Lower leg skin (tissue), 4 donors: ENCODE measurements at regions of chr17 and their contacts with region 1.

Region 1: GRCh38 chr17:59062509-59062908 is 44.2 kb downstream of the TRIM37 start:
- DNase-seq: no peak
- H3K4me3 ChIP-seq: no peak overlapping the region
- CTCF ChIP-seq: no peak
- POLR2A ChIP-seq: no peak

Region 2: DNA sequence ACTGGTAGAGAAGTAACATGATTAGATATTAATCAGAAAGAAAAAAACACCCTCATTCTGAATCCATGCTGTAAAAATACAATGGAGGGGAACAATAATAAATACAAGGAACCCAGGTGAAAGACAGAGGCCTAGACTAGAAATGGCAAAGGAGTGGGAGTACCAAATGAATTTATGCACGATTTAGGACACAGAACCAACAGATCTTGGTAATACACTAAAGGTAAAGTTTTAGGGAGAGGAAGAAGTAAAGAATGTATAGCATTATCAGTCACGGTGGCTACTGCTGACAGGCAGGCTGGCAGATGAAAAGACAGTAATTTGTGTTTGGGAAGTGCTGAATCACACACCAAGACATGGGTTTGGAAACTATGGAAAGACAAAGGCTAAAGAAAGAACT is 22.3 kb before region 1 on chr17:
- intact Hi-C with region 1: loop called (anchors 1 kb)
- DNase-seq: no peak
- H3K4me3 ChIP-seq: no peak overlapping the region
- CTCF ChIP-seq: no peak
- POLR2A ChIP-seq: no peak

Region 3: GRCh38 chr17:59149841-59150511 is 87.5 kb after region 1 on chr17:
- intact Hi-C with region 1: no loop called
- DNase-seq: no peak
- H3K4me3 ChIP-seq: no peak overlapping the region
- CTCF ChIP-seq: no peak
- POLR2A ChIP-seq: no peak

Region 4: GRCh38 chr17:59558977-59559376 is 496.5 kb after region 1 on chr17:
- intact Hi-C with region 1: no loop called
- DNase-seq: no peak
- H3K4me3 ChIP-seq: no peak overlapping the region
- CTCF ChIP-seq: no peak
- POLR2A ChIP-seq: no peak